T-cell (primary cell): ENCODE measurements at regions of chr1 and their contacts with region 1.

Region 1: GRCh38 chr1:2188328-2188727 is 6.2 kb downstream of the FAAP20 start:
- DNase-seq: no peak
- ATAC-seq: no peak
- H3K4me3 ChIP-seq: no peak overlapping the region
- H3K4me3 Mint-ChIP-seq: peak overlapping the region in 2 of 3 donors; percentile 13 to 27
- H3K27ac ChIP-seq: no peak overlapping the region
- H3K27ac Mint-ChIP-seq: no peak overlapping the region
- H3K4me1 ChIP-seq: peaks cover 2 to 41% of the 10 kb centered on the region in 2 experiments
- H3K4me1 Mint-ChIP-seq: peaks cover 16 to 20% (median 18%) of the 10 kb centered on the region in 3 donors
- H3K27me3 ChIP-seq: no peaks in the 10 kb centered on the region
- H3K27me3 Mint-ChIP-seq: no peaks in the 10 kb centered on the region

Region 2: GRCh38 chr1:1973716-1974642 is 214.3 kb before region 1 on chr1:
- CTCF ChIA-PET with region 1: no interaction called
- POLR2A ChIA-PET with region 1: no interaction called
- DNase-seq: no peak
- ATAC-seq: no peak
- H3K4me3 ChIP-seq: no peak overlapping the region
- H3K4me3 Mint-ChIP-seq: no peak overlapping the region
- H3K27ac ChIP-seq: no peak overlapping the region
- H3K27ac Mint-ChIP-seq: no peak overlapping the region
- H3K4me1 ChIP-seq: no peaks in the 10 kb centered on the region
- H3K4me1 Mint-ChIP-seq: no peaks in the 10 kb centered on the region
- H3K27me3 ChIP-seq: peaks cover 0 to 31% of the 10 kb centered on the region in 2 experiments
- H3K27me3 Mint-ChIP-seq: peaks cover 7 to 8% of the 10 kb centered on the region in 2 donors

Region 3: DNA sequence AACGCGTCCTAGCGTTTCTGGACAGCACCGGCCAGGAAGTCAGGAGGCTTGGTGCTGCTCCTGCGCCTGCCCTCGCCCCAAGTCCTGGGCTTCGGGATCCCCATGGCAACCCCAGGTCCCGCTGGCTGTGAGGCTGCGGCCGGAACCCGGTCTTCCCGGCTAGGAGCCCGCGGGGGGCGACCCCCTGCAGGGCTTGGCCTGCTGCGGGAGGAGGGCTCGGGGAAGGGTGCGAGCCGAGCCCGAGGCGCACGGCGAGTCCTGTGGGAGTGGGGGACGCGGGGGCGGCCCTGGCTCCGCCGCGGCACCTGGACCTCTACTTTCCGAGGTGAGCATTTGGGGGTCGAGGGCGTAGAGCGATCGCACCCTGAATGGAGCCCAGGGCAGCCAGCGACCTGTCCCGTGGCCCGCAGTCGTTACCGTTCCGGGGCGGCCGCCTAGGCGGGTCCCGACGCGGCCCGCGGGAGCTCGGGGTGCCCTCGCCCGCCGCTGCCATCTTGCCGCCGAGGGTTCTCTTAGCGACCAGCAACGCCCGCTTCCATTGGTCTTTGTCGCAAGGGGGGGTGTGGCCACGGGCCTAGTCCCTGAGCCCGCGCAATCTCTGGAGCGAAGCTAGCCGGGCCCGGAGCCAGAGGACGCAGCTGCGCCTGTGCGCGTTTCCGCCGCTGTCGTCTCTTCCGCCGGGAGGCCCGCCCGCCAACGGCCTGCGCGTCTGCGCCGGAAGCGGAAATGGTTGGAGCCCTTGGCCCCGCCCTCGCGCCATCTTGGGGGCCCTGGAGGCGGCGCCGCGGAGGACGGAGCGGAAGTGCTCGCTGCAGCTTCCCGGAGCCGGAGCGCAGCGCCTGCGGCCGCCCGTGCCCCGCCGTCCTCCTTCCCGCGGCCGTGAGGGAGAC is 203.0 kb after region 1 on chr1 and contains the starts of genes MORN1 and RER1:
- CTCF ChIA-PET with region 1: no interaction called
- POLR2A ChIA-PET with region 1: interaction called in 1 of 2 experiments, 10 read pairs
- DNase-seq: peak; percentile 95 to 100 (median 99)
- ATAC-seq: peak; percentile 94 to 96 (median 95)
- H3K4me3 ChIP-seq: peak within 1 kb of the TSS; percentile 62 to 85
- H3K4me3 Mint-ChIP-seq: peak within 1 kb of the TSS; percentile 84 to 88 (median 85)
- H3K27ac ChIP-seq: peak within 1 kb of the TSS; percentile 45
- H3K27ac Mint-ChIP-seq: peak within 1 kb of the TSS; percentile 75 to 85
- H3K4me1 ChIP-seq: peaks cover 11 to 44% of the 10 kb centered on the region in 2 experiments
- H3K4me1 Mint-ChIP-seq: peaks cover 29 to 43% (median 37%) of the 10 kb centered on the region in 3 donors
- H3K27me3 ChIP-seq: no peaks in the 10 kb centered on the region
- H3K27me3 Mint-ChIP-seq: no peaks in the 10 kb centered on the region
- total RNA-seq, gene MORN1: 8.2 to 17.5 (median 13.2) TPM
- total RNA-seq, gene RER1: 84.3 to 129 (median 125) TPM